ENCODE measurements at regions of chr13 and their contacts with region 1.

Region 1: DNA sequence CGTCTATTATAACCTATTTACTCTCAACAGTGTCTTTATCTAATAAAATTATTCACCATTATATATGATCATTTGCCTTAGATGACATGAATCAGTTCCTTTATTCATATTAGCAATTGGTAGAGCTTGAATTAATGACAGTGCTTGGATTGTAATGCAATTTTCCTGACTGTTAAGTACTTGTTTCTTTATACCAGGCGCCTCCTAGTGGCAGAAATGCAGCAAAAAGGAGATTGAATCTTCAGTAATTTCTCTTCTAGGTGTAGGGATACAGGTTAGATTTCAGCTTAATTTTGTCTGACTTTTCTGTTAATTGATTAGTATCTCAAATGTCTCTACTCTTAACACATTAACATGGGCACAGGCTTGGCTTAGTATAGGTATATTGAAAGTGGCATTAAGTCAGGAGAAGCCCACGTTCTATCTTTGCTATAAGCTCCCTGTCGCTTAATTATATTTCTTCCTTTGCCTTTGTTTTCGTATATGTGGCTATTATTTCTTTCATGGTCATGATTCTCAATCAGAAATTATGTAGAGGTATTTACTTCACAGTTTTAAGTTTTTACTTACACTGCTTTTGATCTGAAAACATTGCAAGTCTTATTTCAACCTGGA is 9.1 kb upstream of the LHFPL6 start:
- DNase-seq: peak; percentile 57
- H3K4me3 Mint-ChIP-seq: no peak overlapping the region
- H3K27ac Mint-ChIP-seq: no peak overlapping the region
- H3K4me1 Mint-ChIP-seq: no peaks in the 10 kb centered on the region
- H3K27me3 Mint-ChIP-seq: peaks cover 30% of the 10 kb centered on the region
- CTCF ChIP-seq: peak; percentile 25

Region 2: DNA sequence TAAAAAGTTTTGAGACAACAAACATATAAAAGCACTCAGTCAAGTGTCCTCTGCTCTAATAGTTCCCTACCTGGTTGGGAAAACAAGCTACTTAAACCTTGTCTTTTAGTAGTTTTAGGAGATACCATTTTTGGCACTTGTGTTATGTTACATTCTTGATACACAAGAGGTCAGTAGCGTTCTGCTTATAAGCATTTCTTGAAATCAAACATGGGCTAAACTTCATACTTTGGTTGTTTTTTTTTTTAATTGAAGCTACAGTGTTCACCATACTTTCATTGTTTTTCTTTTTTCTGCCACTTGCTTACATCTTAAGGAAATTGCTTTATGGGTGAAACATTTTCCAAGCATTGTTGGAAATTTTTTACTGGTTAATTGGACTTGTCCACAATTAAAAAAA is 561.0 kb before region 1 on chr13:
- CTCF ChIA-PET with region 1: interaction called, 7 read pairs
- intact Hi-C with region 1: loop called (anchors 5 kb)
- DNase-seq: no peak
- H3K4me3 Mint-ChIP-seq: no peak overlapping the region
- H3K27ac Mint-ChIP-seq: no peak overlapping the region
- H3K4me1 Mint-ChIP-seq: no peaks in the 10 kb centered on the region
- H3K27me3 Mint-ChIP-seq: no peaks in the 10 kb centered on the region
- CTCF ChIP-seq: no peak

Region 3: GRCh38 chr13:39144941-39145533 is 467.1 kb before region 1 on chr13:
- CTCF ChIA-PET with region 1: interaction called, 7 read pairs
- intact Hi-C with region 1: loop called (anchors 5 kb)
- DNase-seq: peak; percentile 45
- H3K4me3 Mint-ChIP-seq: no peak overlapping the region
- H3K27ac Mint-ChIP-seq: no peak overlapping the region
- H3K4me1 Mint-ChIP-seq: peaks cover 8% of the 10 kb centered on the region
- H3K27me3 Mint-ChIP-seq: peaks cover 59% of the 10 kb centered on the region
- CTCF ChIP-seq: peak; percentile 32

Region 4: GRCh38 chr13:39273953-39274738 is 338.0 kb before region 1 on chr13:
- CTCF ChIA-PET with region 1: no interaction called
- intact Hi-C with region 1: loop called (anchors 5 kb)
- DNase-seq: peak; percentile 4
- H3K4me3 Mint-ChIP-seq: no peak overlapping the region
- H3K27ac Mint-ChIP-seq: no peak overlapping the region
- H3K4me1 Mint-ChIP-seq: no peaks in the 10 kb centered on the region
- H3K27me3 Mint-ChIP-seq: peaks cover under 1% of the 10 kb centered on the region
- CTCF ChIP-seq: no peak

Region 5: DNA sequence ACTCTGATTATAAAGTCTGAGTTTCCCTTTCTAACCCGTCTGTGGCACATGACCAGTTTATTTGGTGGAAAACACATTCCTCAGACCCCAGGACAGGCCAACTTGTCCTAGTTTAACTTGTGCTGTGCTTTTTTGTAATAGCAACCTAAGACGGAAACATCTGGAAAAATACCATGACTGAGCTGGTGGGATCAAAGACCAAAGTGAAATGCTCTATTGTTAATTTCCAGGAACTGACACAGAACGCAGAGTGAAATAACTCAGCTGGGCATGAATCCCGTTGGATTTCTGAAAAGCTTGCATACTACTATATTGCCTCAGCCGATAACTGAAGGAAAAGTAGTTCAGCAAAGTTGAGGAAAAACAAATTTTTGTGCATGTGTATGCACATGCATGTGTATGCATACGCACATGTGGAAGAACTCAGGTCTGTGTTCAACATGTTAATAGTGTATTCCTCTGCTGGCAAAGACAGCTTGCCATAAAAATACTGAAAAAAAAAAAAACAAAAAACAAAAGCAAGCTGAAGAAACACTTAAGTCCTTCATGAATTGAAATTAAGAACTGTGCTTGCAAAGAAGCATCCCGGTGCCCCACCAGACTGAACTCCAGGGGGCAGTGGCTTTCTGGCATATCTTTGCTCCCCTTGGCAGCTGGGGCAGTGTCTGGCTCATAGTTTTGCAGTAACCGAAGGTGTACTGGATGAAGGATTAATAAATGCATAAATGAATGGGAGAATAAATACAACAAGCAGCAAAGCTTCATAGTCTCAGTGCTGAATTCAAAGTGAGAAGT is 196.9 kb before region 1 on chr13:
- CTCF ChIA-PET with region 1: interaction called, 9 read pairs
- intact Hi-C with region 1: loop called (anchors 5 kb)
- DNase-seq: peak; percentile 16
- H3K4me3 Mint-ChIP-seq: no peak overlapping the region
- H3K27ac Mint-ChIP-seq: no peak overlapping the region
- H3K4me1 Mint-ChIP-seq: peaks cover 8% of the 10 kb centered on the region
- H3K27me3 Mint-ChIP-seq: peaks cover 7% of the 10 kb centered on the region
- CTCF ChIP-seq: no peak

Region 6: GRCh38 chr13:39538816-39539790 is 73.0 kb before region 1 on chr13:
- CTCF ChIA-PET with region 1: no interaction called
- intact Hi-C with region 1: no loop called
- DNase-seq: no peak
- H3K4me3 Mint-ChIP-seq: no peak overlapping the region
- H3K27ac Mint-ChIP-seq: no peak overlapping the region
- H3K4me1 Mint-ChIP-seq: no peaks in the 10 kb centered on the region
- H3K27me3 Mint-ChIP-seq: peaks cover 12% of the 10 kb centered on the region
- CTCF ChIP-seq: no peak

Region 7: DNA sequence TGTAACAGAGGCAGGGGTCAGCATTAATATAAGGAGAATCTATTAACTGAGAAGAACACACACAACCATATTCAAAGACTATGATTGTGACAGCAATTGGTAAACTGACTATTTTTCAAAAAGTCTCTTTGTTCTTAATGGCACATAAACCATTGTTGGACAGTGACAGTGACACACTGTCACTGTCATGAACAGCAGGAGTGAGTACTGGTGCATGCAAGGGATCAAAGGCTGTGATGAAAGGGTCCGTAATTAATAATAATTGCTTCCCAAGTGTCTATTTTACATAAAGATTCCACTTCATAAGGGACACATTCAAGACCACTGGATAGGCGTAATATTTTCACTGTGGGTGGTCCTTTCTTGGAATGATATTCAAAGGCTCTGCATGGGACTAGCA is 59.9 kb before region 1 on chr13:
- CTCF ChIA-PET with region 1: no interaction called
- intact Hi-C with region 1: no loop called
- DNase-seq: no peak
- H3K4me3 Mint-ChIP-seq: no peak overlapping the region
- H3K27ac Mint-ChIP-seq: no peak overlapping the region
- H3K4me1 Mint-ChIP-seq: no peaks in the 10 kb centered on the region
- H3K27me3 Mint-ChIP-seq: peaks cover 13% of the 10 kb centered on the region
- CTCF ChIP-seq: no peak

Region 8: GRCh38 chr13:39637890-39638289 is 25.8 kb after region 1 on chr13:
- CTCF ChIA-PET with region 1: no interaction called
- intact Hi-C with region 1: no loop called
- DNase-seq: no peak
- H3K4me3 Mint-ChIP-seq: no peak overlapping the region
- H3K27ac Mint-ChIP-seq: no peak overlapping the region
- H3K4me1 Mint-ChIP-seq: no peaks in the 10 kb centered on the region
- H3K27me3 Mint-ChIP-seq: peaks cover 28% of the 10 kb centered on the region
- CTCF ChIP-seq: no peak